Activated CD4-positive, alpha-beta memory T cell treated with anti-CD3 and anti-CD28 coated beads for 36 hours (primary cell): ENCODE measurements at regions of chr12 and their contacts with region 1.

Region 1: DNA sequence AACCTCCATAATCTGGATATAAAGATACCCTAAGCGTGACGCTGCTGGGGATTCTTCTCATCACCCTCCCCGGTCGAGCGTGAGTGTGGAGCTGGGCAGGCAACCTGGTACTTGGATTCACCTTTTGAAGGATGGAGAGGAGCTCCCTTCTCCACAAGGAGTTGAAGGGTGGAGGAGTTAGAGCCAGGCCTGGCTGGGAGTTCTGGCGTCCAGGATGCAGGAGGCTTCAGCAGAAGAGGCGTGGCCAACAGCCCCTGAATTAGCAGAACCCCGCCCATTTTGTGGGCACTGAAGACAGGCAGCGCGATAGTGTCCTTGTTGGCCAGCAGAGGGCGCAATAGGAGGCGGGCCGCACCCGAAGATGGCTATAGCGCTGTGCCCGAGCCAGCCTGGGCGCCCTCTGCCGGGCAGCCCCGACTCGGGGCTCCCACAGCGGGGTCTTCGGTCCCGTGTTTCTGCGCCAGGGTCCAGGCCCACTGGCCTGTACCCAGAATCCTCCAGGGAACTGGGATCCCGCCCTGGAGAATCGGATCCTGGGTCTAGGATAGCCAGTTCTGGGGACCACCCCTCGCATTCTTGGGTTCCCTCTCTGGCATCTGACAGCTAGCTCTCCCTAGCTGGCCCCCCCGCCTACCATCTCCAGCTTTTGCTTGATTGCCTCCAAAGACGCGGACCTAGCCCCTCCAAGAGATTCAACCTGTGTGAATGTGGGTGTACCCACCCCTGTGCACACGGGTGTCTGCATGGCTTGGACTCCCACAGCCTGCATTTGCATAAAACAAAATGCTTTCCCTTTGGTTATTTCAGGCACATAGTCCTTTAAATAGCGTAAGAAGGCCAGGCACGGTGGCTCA is 26.0 kb upstream of the SMUG1 start:
- DNase-seq: peak; percentile 94
- H3K4me3 Mint-ChIP-seq: peak overlapping the region; percentile 70
- H3K27ac Mint-ChIP-seq: no peak overlapping the region
- H3K4me1 Mint-ChIP-seq: peaks cover 20% of the 10 kb centered on the region
- H3K27me3 Mint-ChIP-seq: no peaks in the 10 kb centered on the region

Region 2: GRCh38 chr12:54017878-54018467 is 196.8 kb before region 1 on chr12:
- CTCF ChIA-PET with region 1: interaction called, 11 read pairs
- POLR2A ChIA-PET with region 1: no interaction called
- intact Hi-C with region 1: no loop called
- DNase-seq: peak; percentile 73
- H3K4me3 Mint-ChIP-seq: peak overlapping the region; percentile 72
- H3K27ac Mint-ChIP-seq: no peak overlapping the region
- H3K4me1 Mint-ChIP-seq: peaks cover 19% of the 10 kb centered on the region
- H3K27me3 Mint-ChIP-seq: peaks cover 69% of the 10 kb centered on the region

Region 3: GRCh38 chr12:54201001-54201794 is 13.6 kb before region 1 on chr12:
- CTCF ChIA-PET with region 1: interaction called, 43 read pairs
- POLR2A ChIA-PET with region 1: no interaction called
- intact Hi-C with region 1: no loop called
- DNase-seq: peak; percentile 77
- H3K4me3 Mint-ChIP-seq: no peak overlapping the region
- H3K27ac Mint-ChIP-seq: no peak overlapping the region
- H3K4me1 Mint-ChIP-seq: peaks cover 3% of the 10 kb centered on the region
- H3K27me3 Mint-ChIP-seq: peaks cover 48% of the 10 kb centered on the region

Region 4: GRCh38 chr12:54300732-54301427 is 86.1 kb after region 1 on chr12 and contains the start of gene NFE2:
- CTCF ChIA-PET with region 1: no interaction called
- POLR2A ChIA-PET with region 1: no interaction called
- intact Hi-C with region 1: no loop called
- DNase-seq: peak; percentile 56
- H3K4me3 Mint-ChIP-seq: peak within 1 kb of the TSS; percentile 21
- H3K27ac Mint-ChIP-seq: no peak within 1 kb of the TSS
- H3K4me1 Mint-ChIP-seq: peaks cover 9% of the 10 kb centered on the region
- H3K27me3 Mint-ChIP-seq: peaks cover 47% of the 10 kb centered on the region
- total RNA-seq, gene NFE2: not detected

Region 5: DNA sequence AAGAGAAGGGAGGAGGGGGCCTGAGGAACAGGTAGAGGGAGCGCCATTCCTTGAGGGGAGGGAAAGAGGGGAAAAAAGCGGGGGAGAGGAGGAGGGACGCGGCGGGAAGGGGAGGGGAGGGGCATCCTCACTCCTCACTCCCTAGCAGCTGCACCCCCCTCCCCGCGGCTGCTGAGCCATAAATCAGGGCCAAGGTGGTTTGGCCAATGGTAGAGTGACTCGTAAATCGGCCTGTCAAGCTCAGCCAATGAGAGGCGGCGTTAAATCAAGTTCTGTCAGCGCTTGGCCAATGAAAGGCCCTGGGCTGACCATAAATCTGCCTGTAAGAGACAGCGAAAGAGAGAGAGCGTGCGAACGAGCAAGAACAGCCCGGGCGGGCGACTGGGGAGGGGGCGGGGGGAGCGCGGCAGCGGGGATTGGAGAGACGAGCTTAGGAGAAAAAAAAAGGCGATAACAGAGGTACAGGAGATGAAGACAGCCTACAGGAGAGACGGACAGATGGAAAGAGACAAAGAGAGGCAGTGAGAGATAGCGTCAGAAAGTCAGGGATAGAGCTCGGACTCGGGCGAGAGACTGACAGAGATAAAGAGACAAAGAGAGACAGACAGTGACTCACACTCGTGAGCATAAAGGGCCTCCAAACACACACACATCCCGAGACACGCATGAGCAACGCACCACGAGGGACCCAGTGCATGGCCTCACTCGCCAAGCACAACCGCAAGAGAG is 144.4 kb after region 1 on chr12:
- CTCF ChIA-PET with region 1: interaction called, 18 read pairs
- POLR2A ChIA-PET with region 1: interaction called, 4 read pairs
- intact Hi-C with region 1: loop called (anchors 1 kb)
- DNase-seq: peak; percentile 97
- H3K4me3 Mint-ChIP-seq: no peak overlapping the region
- H3K27ac Mint-ChIP-seq: no peak overlapping the region
- H3K4me1 Mint-ChIP-seq: peaks cover 16% of the 10 kb centered on the region
- H3K27me3 Mint-ChIP-seq: no peaks in the 10 kb centered on the region